ENCODE measurements at regions of chr11 and their contacts with region 1.

Region 1: GRCh38 chr11:46616998-46617675 is at the starts of genes ATG13 and HARBI1:
- DNase-seq: peak; percentile 91 to 95 (median 92)
- ATAC-seq: peak; percentile 91 to 99 (median 98)
- H3K4me3 ChIP-seq: peak within 1 kb of the TSS; percentile 67 to 99 (median 92)
- H3K27ac ChIP-seq: peak within 1 kb of the TSS; percentile 85 to 97 (median 92)
- H3K4me1 ChIP-seq: peaks cover 0 to 50% (median 22%) of the 10 kb centered on the region in 12 donors
- H3K27me3 ChIP-seq: no peaks in the 10 kb centered on the region
- CTCF ChIP-seq: no peak
- POLR2A ChIP-seq: peak in 1 of 2 donors; percentile 64
- total RNA-seq, gene ATG13: 38.8 to 74.8 (median 48.7) TPM
- total RNA-seq, gene HARBI1: 2.5 to 4.5 (median 3.5) TPM

Region 2: GRCh38 chr11:46392421-46393230 is 224.5 kb before region 1 on chr11:
- intact Hi-C with region 1: loop called in 8 of 10 experiments (anchors 5 to 10 kb)
- DNase-seq: peak; percentile 83 to 93 (median 90)
- ATAC-seq: peak; percentile 90 to 92 (median 90)
- H3K4me3 ChIP-seq: peak overlapping the region; percentile 7 to 55 (median 44)
- H3K27ac ChIP-seq: no peak overlapping the region
- H3K4me1 ChIP-seq: peaks cover 0 to 51% (median 28%) of the 10 kb centered on the region in 12 donors
- H3K27me3 ChIP-seq: peaks cover 11 to 51% (median 27%) of the 10 kb centered on the region in 9 donors
- CTCF ChIP-seq: no peak
- POLR2A ChIP-seq: no peak

Region 3: GRCh38 chr11:46537537-46538295 is 79.4 kb before region 1 on chr11:
- intact Hi-C with region 1: loop called in 2 of 10 experiments (anchors 10 kb)
- DNase-seq: peak in 4 of 5 donors; percentile 53 to 63 (median 60)
- ATAC-seq: peak; percentile 46 to 78 (median 74)
- H3K4me3 ChIP-seq: no peak overlapping the region
- H3K27ac ChIP-seq: no peak overlapping the region
- H3K4me1 ChIP-seq: peaks cover 0 to 26% (median 8%) of the 10 kb centered on the region in 12 donors
- H3K27me3 ChIP-seq: no peaks in the 10 kb centered on the region
- CTCF ChIP-seq: peak; percentile 80 to 94 (median 90)
- POLR2A ChIP-seq: no peak

Region 4: DNA sequence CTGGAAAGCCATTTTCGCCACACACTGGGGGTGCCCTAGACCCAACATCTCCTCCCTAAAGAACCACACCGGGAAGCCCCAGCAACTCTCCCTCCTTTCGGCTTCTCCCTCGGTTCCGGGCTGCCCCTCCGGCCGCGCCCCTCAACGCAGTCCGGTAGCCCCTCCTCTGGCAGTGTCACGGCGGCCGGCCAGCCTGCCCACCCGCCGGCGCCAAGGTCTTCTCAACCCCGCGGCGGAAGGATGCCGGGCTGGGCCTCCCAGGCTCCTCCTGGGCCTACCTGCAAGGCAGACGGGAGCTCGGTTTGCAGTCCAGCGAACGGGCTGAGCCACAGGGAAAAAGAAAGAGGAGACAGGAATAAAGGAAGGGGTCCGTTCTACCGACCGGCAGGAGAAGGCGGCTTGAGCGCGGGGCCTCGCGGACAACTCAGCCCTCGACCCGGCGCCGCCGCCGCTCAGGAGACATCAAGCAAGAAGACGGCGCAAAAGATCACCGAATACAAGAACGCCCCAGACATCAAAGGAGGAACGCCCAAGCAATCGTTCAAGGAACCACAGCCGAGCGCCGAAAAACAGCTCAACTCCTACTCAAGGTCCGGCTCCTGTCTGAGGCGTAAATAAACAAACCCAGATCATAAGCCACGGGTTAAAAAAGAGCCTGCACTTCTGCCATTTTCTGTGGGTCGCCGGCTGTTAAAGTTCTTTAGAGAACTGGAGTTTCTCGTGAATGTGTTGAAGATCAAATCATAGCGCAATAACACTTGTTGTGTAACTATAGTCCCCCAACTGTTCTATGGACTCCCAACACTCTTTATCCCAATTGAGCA is 23.4 kb before region 1 on chr11 and contains the start of gene AMBRA1:
- intact Hi-C with region 1: loop called in 1 of 10 experiments (anchors 2 kb)
- DNase-seq: peak; percentile 83 to 89 (median 86)
- ATAC-seq: peak; percentile 84 to 96 (median 92)
- H3K4me3 ChIP-seq: peak within 1 kb of the TSS; percentile 66 to 99 (median 91)
- H3K27ac ChIP-seq: peak within 1 kb of the TSS; percentile 70 to 88 (median 82)
- H3K4me1 ChIP-seq: peaks cover 0 to 51% (median 31%) of the 10 kb centered on the region in 12 donors
- H3K27me3 ChIP-seq: no peaks in the 10 kb centered on the region
- CTCF ChIP-seq: peak in 1 of 12 donors; percentile 9
- POLR2A ChIP-seq: peak in 1 of 2 donors; percentile 38
- total RNA-seq, gene AMBRA1: 13.3 to 23.5 (median 16.7) TPM

Region 5: GRCh38 chr11:46682773-46683752 is 65.9 kb after region 1 on chr11:
- intact Hi-C with region 1: loop called in 1 of 10 experiments (anchors 5 kb)
- DNase-seq: no peak
- ATAC-seq: no peak
- H3K4me3 ChIP-seq: no peak overlapping the region
- H3K27ac ChIP-seq: peak overlapping the region; percentile 26 to 89 (median 78)
- H3K4me1 ChIP-seq: peaks cover 0 to 50% (median 36%) of the 10 kb centered on the region in 12 donors
- H3K27me3 ChIP-seq: no peaks in the 10 kb centered on the region
- CTCF ChIP-seq: no peak
- POLR2A ChIP-seq: no peak

Region 6: DNA sequence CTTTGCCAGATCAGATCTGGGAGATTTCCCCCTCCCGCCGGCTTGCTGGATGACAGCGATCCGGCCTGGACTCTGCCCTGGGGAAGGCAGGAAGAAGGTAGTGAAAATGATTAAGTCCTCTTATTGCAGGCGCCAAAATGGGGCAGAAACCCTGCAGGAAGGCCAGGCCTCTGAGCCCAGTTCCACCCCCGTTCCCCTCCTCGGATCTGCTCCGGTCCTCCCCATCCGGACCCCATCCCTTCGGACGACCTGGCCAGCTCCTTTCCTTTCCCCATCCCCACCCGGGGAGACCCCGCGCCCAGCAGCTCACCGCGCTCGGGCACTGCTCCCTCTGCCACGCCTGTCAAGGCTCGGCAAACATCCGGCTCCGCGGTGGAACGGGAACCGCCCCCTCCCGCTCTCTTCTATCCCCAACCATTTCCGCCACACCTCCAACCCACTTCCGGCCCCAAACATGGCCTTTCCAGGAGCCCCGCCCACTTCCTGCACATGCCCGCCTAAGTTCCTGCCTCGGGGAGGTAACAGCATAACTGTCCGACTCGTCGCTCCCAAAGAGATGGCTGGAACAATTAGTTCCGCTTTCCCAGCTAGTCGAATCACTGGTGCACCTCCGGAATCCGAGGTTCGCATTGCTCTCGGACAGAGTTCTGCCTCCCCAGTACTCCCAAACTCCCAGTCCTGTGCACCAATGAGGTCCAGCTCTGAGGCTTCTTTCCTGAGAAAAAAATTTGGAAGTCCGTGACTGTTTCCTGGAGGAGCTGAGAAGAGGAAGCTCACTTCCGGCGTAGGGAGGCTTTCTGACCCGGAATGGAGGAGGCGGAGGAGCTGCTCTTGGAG is 83.3 kb after region 1 on chr11 and contains the starts of genes ARHGAP1 and ZNF408:
- intact Hi-C with region 1: loop called in 2 of 10 experiments (anchors 5 kb)
- DNase-seq: peak; percentile 99 to 100 (median 99)
- ATAC-seq: peak; percentile 92 to 94 (median 94)
- H3K4me3 ChIP-seq: peak within 1 kb of the TSS; percentile 68 to 100 (median 88)
- H3K27ac ChIP-seq: peak within 1 kb of the TSS; percentile 87 to 100 (median 94)
- H3K4me1 ChIP-seq: peaks cover 4 to 68% (median 57%) of the 10 kb centered on the region in 12 donors
- H3K27me3 ChIP-seq: no peaks in the 10 kb centered on the region
- CTCF ChIP-seq: no peak
- POLR2A ChIP-seq: peak in 1 of 2 donors; percentile 87
- total RNA-seq, gene ARHGAP1: 57.5 to 309 (median 78.9) TPM
- total RNA-seq, gene ZNF408: 5.3 to 10.0 (median 7.1) TPM